AG04450 (cell line): ENCODE measurements at regions of chr6 and their contacts with region 1.

Region 1: DNA sequence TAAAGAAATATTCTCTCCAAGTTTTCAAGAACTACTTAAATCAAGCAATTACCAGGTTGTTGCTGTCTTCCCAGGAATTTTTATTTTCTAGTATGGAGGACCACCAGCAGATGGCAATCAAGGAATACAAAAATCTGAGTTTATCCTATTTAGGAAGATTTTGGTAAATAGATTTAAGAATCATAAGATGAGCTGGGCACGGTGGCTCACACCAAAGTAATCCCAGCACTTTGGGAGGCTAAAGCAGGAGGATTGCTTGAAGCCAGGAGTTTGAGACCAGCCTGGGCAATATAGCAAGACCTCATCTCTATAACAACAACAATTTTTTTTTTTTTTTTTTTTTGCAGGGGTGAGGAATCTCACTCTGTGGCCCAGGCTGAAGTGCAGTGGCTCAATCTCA is 19.3 kb upstream of the SEC63 start:
- DNase-seq: no peak
- H3K4me3 ChIP-seq: no peak overlapping the region
- H3K27ac ChIP-seq: no peak overlapping the region
- H3K27me3 ChIP-seq: peaks cover 3% of the 10 kb centered on the region
- CTCF ChIP-seq: peak; percentile 54

Region 2: GRCh38 chr6:106997390-106998158 is 979.7 kb before region 1 on chr6:
- CTCF ChIA-PET with region 1: no interaction called
- POLR2A ChIA-PET with region 1: no interaction called
- DNase-seq: peak; percentile 23
- H3K4me3 ChIP-seq: no peak overlapping the region
- H3K27ac ChIP-seq: no peak overlapping the region
- H3K27me3 ChIP-seq: no peaks in the 10 kb centered on the region
- CTCF ChIP-seq: peak; percentile 83

Region 3: DNA sequence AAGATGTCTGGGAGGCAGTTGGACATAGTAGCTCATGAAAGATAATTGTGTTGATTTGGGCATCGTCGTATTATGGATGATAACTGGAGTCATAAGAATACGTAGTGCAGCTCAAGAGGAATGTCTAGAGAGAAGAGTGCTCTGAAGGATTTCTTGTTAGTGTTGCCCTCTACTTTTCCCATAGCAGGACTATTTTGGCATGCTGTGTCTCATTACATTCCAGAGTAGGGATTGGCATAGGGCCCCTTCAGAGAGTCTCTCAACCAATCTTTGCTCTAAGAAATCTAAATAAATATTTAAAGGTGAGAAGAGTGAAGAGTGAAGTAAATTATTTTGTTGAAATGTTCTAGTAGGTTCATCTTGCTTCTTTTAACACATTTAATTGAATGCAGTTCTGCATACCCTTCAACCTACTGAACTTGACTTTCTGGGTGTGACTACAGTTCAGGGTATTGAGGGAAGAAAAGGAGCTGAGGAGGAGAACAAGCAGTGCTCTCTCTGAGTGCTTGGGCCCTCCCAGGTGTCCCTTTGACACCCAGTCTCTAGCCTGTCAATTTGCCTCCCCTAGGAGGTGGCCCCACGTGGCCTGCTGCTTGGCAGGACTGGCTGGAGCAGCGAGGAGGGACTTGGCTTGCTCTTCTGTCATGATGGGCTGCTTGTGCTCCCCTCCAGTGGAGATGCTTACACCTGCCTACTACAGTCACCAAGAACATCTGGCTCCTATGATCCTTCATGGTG is 454.1 kb before region 1 on chr6:
- CTCF ChIA-PET with region 1: no interaction called
- POLR2A ChIA-PET with region 1: no interaction called
- DNase-seq: no peak
- H3K4me3 ChIP-seq: no peak overlapping the region
- H3K27ac ChIP-seq: no peak overlapping the region
- H3K27me3 ChIP-seq: no peaks in the 10 kb centered on the region
- CTCF ChIP-seq: no peak

Region 4: GRCh38 chr6:107964671-107965340 is 12.5 kb before region 1 on chr6:
- CTCF ChIA-PET with region 1: interaction called, 19 read pairs
- POLR2A ChIA-PET with region 1: no interaction called
- DNase-seq: no peak
- H3K4me3 ChIP-seq: no peak overlapping the region
- H3K27ac ChIP-seq: peak overlapping the region; percentile 34
- H3K27me3 ChIP-seq: no peaks in the 10 kb centered on the region
- CTCF ChIP-seq: no peak

Region 5: DNA sequence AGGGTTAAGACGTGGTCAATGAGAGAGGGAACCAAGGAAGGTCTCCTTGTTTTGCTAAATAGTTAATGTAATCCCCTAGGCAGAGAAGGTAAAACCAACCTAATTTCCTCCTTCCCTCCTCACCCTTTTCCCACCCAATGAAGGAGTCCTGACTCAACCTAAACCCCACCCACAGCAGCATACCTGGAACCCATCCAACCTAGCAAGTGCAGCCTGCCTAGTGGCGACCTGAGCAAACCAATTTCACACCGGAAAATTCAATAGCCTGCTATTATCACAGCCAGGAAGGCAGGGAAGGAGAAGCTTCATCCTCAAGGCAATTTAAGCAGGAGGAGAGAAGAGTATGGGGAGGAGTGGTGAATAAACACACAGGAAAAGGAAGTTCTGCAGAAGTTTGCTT is 50.3 kb after region 1 on chr6:
- CTCF ChIA-PET with region 1: interaction called, 13 read pairs
- POLR2A ChIA-PET with region 1: no interaction called
- DNase-seq: no peak
- H3K4me3 ChIP-seq: no peak overlapping the region
- H3K27ac ChIP-seq: no peak overlapping the region
- H3K27me3 ChIP-seq: no peaks in the 10 kb centered on the region
- CTCF ChIP-seq: no peak

Region 6: GRCh38 chr6:108052706-108053105 is 75.4 kb after region 1 on chr6:
- CTCF ChIA-PET with region 1: interaction called, 309 read pairs
- POLR2A ChIA-PET with region 1: no interaction called
- DNase-seq: no peak
- H3K4me3 ChIP-seq: no peak overlapping the region
- H3K27ac ChIP-seq: no peak overlapping the region
- H3K27me3 ChIP-seq: no peaks in the 10 kb centered on the region
- CTCF ChIP-seq: no peak